Transverse colon (tissue), 4 donors: ENCODE measurements at regions of chr1 and their contacts with region 1.

Region 1: GRCh38 chr1:156104065-156104810 is 10.3 kb upstream of the LMNA start:
- DNase-seq: peak; percentile 79
- H3K4me3 ChIP-seq: no peak overlapping the region
- H3K27ac ChIP-seq: peak overlapping the region; percentile 91 to 97 (median 94)
- H3K4me1 ChIP-seq: peaks cover 39 to 77% (median 64%) of the 10 kb centered on the region in 4 donors
- H3K27me3 ChIP-seq: no peaks in the 10 kb centered on the region
- CTCF ChIP-seq: no peak
- EP300 ChIP-seq: no peak
- POLR2A ChIP-seq: peak; percentile 30

Region 2: DNA sequence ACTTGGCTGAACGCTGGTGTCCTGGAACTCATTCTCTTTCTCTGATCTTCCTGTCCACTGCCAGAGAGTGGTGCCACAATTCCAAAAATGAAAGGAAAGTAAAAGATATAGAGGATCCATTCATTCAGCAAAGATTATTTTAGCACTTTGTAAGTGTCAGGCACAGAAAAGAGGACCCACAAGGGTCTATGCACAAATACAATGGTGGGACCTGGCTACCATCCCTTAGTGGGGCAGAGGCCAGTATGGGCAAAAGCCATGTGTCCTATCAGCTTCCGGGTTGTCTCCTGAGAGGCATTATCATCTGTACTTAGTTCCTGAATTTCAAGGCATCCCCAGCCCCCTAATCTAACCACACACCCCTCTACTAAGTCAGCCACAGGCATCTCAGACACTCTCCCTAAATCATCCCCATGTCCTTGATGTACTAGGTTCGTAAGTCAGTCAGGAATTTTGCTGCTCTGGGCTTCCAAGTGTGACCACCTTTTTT is 102.5 kb before region 1 on chr1:
- in situ Hi-C with region 1: no loop called
- intact Hi-C with region 1: no loop called
- DNase-seq: peak; percentile 44
- H3K4me3 ChIP-seq: peak overlapping the region in 3 of 4 donors; percentile 33 to 46 (median 40)
- H3K27ac ChIP-seq: peak overlapping the region; percentile 79 to 89 (median 87)
- H3K4me1 ChIP-seq: peaks cover 0 to 40% (median 21%) of the 10 kb centered on the region in 4 donors
- H3K27me3 ChIP-seq: no peaks in the 10 kb centered on the region
- CTCF ChIP-seq: no peak
- EP300 ChIP-seq: no peak
- POLR2A ChIP-seq: no peak

Region 3: GRCh38 chr1:156123356-156124196 is 19.3 kb after region 1 on chr1:
- in situ Hi-C with region 1: no loop called
- intact Hi-C with region 1: loop called (anchors 2 kb)
- DNase-seq: peak; percentile 95
- H3K4me3 ChIP-seq: peak overlapping the region in 3 of 4 donors; percentile 6 to 37 (median 10)
- H3K27ac ChIP-seq: peak overlapping the region; percentile 96 to 100 (median 98)
- H3K4me1 ChIP-seq: peaks cover 89 to 100% (median 98%) of the 10 kb centered on the region in 4 donors
- H3K27me3 ChIP-seq: no peaks in the 10 kb centered on the region
- CTCF ChIP-seq: peak in 4 of 5 experiments; percentile 22 to 28 (median 24)
- EP300 ChIP-seq: peak; percentile 64
- POLR2A ChIP-seq: peak; percentile 48